ENCODE measurements at regions of chr1 and their contacts with region 1.

Region 1: DNA sequence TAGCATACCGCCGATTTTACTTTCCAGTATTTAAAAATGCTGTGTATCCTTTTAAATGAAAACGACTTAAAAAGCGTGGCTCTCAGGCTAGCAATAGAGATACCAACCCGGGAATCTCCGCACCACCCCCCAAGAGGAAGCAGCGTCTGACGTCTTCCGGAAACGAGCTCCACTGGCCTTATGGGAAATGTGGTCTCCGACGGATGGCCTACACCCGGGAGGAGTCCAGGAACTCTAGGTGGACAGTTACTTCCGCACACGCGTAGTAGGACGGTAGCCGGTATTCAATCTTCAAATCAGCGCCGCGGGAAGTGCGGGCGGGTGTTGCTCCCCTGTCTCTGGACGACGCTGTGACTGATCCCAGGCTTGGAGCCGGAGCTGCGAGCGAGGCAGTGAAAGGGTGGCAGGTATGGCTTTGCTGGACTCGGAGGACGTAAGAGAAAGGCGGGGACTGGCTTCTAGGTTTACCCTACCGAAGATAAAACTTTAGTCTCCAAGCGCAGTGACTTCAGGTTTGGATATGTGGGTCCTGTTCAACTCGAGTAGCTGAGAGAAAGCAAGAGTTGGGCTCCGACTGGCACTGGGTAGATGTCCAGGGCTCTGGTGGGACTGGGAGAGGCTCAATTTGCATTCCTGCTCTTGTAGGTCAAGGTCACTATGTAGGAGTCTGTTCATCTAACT is at the start of gene ZNF684:
- DNase-seq: peak; percentile 92
- H3K4me3 Mint-ChIP-seq: peak within 1 kb of the TSS; percentile 96
- H3K27ac Mint-ChIP-seq: peak within 1 kb of the TSS; percentile 84
- H3K4me1 Mint-ChIP-seq: peaks cover 19% of the 10 kb centered on the region
- H3K27me3 Mint-ChIP-seq: peaks cover 2% of the 10 kb centered on the region
- total RNA-seq, gene ZNF684: 4.8 to 5.9 TPM

Region 2: DNA sequence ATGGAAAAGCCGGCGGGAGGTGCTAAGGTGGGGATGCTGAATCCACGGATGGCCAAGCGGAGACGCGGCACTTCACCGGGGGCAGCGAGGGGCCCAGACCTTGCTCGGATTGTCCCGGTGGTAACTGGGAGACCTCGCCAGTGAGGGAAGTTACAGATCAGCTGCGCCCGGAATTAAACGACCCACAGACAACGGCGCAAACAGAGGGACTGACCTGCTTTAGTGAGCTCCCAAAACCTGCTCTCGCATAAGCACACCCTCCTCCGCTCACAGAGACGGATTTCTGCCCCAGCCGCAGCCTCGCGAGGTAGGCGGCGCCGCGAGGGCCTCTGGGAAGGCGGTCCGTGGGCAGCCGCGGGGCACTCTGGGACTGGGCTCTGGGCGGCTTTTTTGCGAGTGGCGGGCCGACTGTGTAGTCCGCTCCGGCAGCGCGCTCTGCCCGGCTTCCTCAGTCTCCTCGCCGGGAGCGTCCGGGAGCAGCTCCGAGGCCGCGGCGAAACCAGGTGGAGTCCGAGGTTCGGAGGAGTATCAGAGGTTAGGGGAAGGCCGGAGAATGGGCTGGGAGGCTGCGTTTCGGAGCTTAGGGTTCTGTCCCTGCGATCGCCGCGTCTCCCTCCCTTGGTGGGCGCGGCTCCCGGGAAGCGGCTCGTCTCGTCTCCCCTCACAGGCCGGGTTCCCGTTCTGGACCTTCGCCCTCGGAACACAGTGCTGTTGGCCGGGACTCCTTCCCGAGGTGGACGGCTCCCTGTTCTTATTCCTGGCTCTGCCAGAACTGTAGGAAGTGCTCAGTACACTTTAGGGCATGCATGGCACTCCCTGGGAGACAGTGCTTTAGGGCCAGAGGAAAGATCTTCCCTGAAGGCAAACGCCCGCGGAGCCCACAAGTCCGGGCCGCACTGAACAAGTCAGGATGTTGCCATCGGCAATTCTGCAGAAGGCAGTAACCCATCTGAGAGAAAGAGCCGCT is 22.9 kb before region 1 on chr1 and contains the start of gene EXO5:
- CTCF ChIA-PET with region 1: interaction called, 15 read pairs
- POLR2A ChIA-PET with region 1: interaction called, 5 read pairs
- intact Hi-C with region 1: loop called (anchors 1 kb)
- DNase-seq: peak; percentile 92
- H3K4me3 Mint-ChIP-seq: peak within 1 kb of the TSS; percentile 77
- H3K27ac Mint-ChIP-seq: peak within 1 kb of the TSS; percentile 78
- H3K4me1 Mint-ChIP-seq: peaks cover 11% of the 10 kb centered on the region
- H3K27me3 Mint-ChIP-seq: no peaks in the 10 kb centered on the region
- total RNA-seq, gene EXO5: 9.7 to 11.7 TPM

Region 3: DNA sequence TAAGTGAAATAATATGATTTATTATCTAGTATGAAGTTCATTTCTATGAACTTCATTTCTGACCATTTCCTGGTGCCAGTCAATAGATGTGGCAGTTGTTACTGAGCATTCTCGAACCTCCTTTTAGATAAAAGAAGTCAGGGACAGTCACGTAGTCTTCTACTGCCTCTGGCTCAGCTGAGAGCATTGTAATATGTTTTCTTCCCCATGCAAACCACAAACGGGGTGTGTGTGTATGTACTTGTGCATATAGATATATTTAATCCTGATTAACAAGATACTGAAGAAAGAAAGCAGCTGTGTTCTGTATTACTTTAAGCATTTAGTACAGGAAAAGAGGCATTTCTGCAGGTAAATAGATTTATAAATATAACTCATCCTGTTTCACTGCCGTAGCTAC is 21.5 kb after region 1 on chr1:
- CTCF ChIA-PET with region 1: interaction called, 12 read pairs
- POLR2A ChIA-PET with region 1: no interaction called
- intact Hi-C with region 1: no loop called
- DNase-seq: no peak
- H3K4me3 Mint-ChIP-seq: no peak overlapping the region
- H3K27ac Mint-ChIP-seq: no peak overlapping the region
- H3K4me1 Mint-ChIP-seq: no peaks in the 10 kb centered on the region
- H3K27me3 Mint-ChIP-seq: no peaks in the 10 kb centered on the region

Region 4: DNA sequence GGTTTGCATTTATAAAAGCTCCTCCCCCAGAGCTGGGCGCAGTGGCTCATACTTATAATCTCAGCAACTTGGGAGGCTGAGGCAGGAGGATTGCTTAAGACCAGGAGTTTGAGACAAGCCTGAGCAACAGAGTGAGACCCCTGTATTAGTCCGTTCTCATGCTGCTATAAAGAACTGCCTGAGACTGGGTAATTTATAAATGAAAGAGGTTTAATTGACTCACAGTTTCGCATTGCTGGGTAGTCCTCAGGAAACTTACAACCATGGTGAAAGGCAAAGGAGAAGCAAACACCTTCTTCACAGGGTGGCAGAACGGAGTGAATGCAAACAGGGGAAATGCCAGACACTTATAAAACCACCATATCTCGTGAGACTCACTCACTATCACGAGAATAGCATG is 52.5 kb after region 1 on chr1:
- CTCF ChIA-PET with region 1: no interaction called
- POLR2A ChIA-PET with region 1: no interaction called
- intact Hi-C with region 1: loop called (anchors 1 kb)
- DNase-seq: peak; percentile 22
- H3K4me3 Mint-ChIP-seq: no peak overlapping the region
- H3K27ac Mint-ChIP-seq: no peak overlapping the region
- H3K4me1 Mint-ChIP-seq: peaks cover 9% of the 10 kb centered on the region
- H3K27me3 Mint-ChIP-seq: no peaks in the 10 kb centered on the region

Region 5: GRCh38 chr1:40877698-40878097 is 346.2 kb after region 1 on chr1:
- CTCF ChIA-PET with region 1: no interaction called
- POLR2A ChIA-PET with region 1: no interaction called
- intact Hi-C with region 1: no loop called
- DNase-seq: peak; percentile 49
- H3K4me3 Mint-ChIP-seq: no peak overlapping the region
- H3K27ac Mint-ChIP-seq: no peak overlapping the region
- H3K4me1 Mint-ChIP-seq: peaks cover 30% of the 10 kb centered on the region
- H3K27me3 Mint-ChIP-seq: peaks cover 2% of the 10 kb centered on the region